ENCODE measurements at regions of chr22 and their contacts with region 1.

Region 1: DNA sequence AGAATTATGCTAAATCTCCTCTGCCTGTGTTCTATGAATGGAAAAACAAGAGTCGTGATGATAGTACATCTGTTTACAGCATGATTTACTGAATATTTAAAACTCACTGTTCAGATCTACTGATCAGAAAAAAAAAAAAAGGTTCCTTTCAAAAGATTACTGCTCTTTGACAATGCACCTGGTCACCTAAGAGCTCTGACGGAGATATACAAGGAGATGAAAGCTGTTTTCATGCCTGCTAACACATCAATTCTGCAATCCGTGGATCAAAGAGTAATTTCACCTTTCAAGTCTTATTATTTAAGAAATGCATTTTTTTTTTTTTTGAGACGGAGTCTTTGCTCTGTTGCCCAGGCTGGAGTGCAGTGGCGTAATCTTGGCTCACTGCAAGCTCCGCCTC is 30.7 kb downstream of the CLTCL1 start:
- DNase-seq: no peak
- ATAC-seq: no peak
- H3K4me3 ChIP-seq: no peak overlapping the region
- H3K27ac ChIP-seq: no peak overlapping the region
- H3K4me1 ChIP-seq: no peaks in the 10 kb centered on the region
- H3K27me3 ChIP-seq: no peaks in the 10 kb centered on the region
- CTCF ChIP-seq: no peak
- EP300 ChIP-seq: no peak
- POLR2A ChIP-seq: no peak
- RAD21 ChIP-seq: no peak

Region 2: DNA sequence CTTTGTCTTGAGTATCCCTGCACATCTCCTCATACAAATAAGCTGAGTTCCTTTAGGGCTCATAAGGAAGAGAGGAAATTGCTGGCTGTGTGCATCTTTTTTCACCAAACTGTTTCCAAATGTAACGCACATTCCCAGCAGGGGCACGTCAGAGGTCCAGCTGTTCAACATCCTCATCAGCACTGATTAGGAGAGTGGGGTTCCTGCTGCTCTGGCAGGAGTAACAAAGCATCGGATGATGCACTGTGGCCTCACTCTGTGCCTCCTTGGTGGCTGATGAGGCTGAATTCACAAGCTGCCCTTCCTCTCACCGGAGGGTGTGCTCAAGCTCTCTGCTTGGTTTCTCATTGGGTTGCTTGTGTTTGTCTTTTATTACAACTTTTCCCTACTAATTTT is 46.7 kb before region 1 on chr22:
- CTCF ChIA-PET with region 1: no interaction called
- POLR2A ChIA-PET with region 1: no interaction called
- RAD21 ChIA-PET with region 1: no interaction called
- SMC1A ChIA-PET with region 1: interaction called, 3 read pairs
- in situ Hi-C with region 1: no loop called
- intact Hi-C with region 1: loop called (anchors 10 kb)
- DNase-seq: no peak
- ATAC-seq: no peak
- H3K4me3 ChIP-seq: no peak overlapping the region
- H3K27ac ChIP-seq: no peak overlapping the region
- H3K4me1 ChIP-seq: no peaks in the 10 kb centered on the region; the same call in 1 of the 2 replicates
- H3K27me3 ChIP-seq: peaks cover 0 to 3% of the 10 kb centered on the region in 2 experiments; a peak in 2 of 4 replicates
- CTCF ChIP-seq: no peak
- EP300 ChIP-seq: no peak
- POLR2A ChIP-seq: no peak
- RAD21 ChIP-seq: no peak

Region 3: DNA sequence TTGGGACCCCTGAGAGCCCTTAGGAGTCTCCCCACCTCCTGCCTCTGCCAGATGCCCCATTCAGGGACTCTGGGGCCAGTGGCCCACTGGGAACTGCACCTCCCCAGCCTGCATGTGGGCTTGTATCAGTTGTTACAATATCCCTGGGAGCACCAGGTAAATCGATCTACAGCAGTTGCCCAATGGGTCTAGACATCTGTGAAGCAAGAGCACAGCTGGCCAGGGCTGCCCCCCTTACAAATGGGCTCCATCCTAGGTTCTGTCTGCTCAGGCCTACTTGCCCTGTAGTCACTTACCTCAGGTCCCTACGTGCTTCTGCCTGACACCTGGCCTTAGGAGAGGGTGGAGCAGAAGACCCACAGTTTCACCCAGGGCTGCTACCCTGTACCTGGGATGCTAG is 108.1 kb after region 1 on chr22:
- CTCF ChIA-PET with region 1: no interaction called
- POLR2A ChIA-PET with region 1: no interaction called
- RAD21 ChIA-PET with region 1: no interaction called
- SMC1A ChIA-PET with region 1: no interaction called
- in situ Hi-C with region 1: no loop called
- intact Hi-C with region 1: no loop called
- DNase-seq: no peak
- ATAC-seq: no peak
- H3K4me3 ChIP-seq: no peak overlapping the region
- H3K27ac ChIP-seq: no peak overlapping the region
- H3K4me1 ChIP-seq: no peaks in the 10 kb centered on the region
- H3K27me3 ChIP-seq: no peaks in the 10 kb centered on the region
- CTCF ChIP-seq: no peak
- EP300 ChIP-seq: no peak
- POLR2A ChIP-seq: no peak
- RAD21 ChIP-seq: no peak

Measured in GM12878 (cell line).